ENCODE measurements at regions of chr3 and their contacts with region 1.

Region 1: GRCh38 chr3:197749601-197750395 is at the start of gene FYTTD1:
- DNase-seq: peak; percentile 79 to 93 (median 88)
- ATAC-seq: peak; percentile 89
- H3K4me3 ChIP-seq: peak within 1 kb of the TSS; percentile 85
- H3K4me3 Mint-ChIP-seq: peak within 1 kb of the TSS; percentile 95 to 100 (median 98)
- H3K27ac ChIP-seq: peak within 1 kb of the TSS; percentile 94
- H3K27ac Mint-ChIP-seq: peak within 1 kb of the TSS; percentile 95 to 100 (median 99)
- H3K4me1 ChIP-seq: peaks cover 11 to 32% of the 10 kb centered on the region in 2 donors
- H3K4me1 Mint-ChIP-seq: peaks cover 27 to 61% (median 52%) of the 10 kb centered on the region in 7 donors
- H3K27me3 ChIP-seq: no peaks in the 10 kb centered on the region
- H3K27me3 Mint-ChIP-seq: no peaks in the 10 kb centered on the region
- total RNA-seq, gene FYTTD1: 45.6 to 63.4 (median 58.0) TPM

Region 2: DNA sequence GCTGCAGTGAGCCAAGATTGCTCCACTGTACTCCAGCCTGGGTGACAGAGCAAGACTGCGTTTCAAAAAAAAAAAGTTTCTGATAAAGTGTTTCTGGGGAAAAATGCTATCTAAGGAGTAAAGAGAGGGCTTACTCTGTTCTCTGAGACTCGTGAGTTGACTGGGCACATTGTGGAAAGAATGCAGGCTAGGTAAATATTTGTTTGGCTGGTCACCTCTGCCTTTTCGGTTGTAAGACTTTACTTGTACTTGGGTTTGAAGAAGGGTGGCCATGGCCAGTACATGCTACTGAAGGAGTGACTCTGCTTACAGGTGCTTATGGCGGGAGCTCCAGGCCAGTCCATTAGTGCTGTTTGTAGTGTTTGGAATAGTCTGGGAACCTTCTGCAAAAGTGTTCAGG is 81.8 kb before region 1 on chr3:
- CTCF ChIA-PET with region 1: no interaction called
- POLR2A ChIA-PET with region 1: no interaction called
- intact Hi-C with region 1: no loop called
- DNase-seq: no peak
- ATAC-seq: no peak
- H3K4me3 ChIP-seq: no peak overlapping the region
- H3K4me3 Mint-ChIP-seq: no peak overlapping the region
- H3K27ac ChIP-seq: no peak overlapping the region
- H3K27ac Mint-ChIP-seq: peak overlapping the region in 1 of 9 donors; percentile 39
- H3K4me1 ChIP-seq: no peaks in the 10 kb centered on the region
- H3K4me1 Mint-ChIP-seq: no peaks in the 10 kb centered on the region
- H3K27me3 ChIP-seq: no peaks in the 10 kb centered on the region
- H3K27me3 Mint-ChIP-seq: no peaks in the 10 kb centered on the region

Region 3: DNA sequence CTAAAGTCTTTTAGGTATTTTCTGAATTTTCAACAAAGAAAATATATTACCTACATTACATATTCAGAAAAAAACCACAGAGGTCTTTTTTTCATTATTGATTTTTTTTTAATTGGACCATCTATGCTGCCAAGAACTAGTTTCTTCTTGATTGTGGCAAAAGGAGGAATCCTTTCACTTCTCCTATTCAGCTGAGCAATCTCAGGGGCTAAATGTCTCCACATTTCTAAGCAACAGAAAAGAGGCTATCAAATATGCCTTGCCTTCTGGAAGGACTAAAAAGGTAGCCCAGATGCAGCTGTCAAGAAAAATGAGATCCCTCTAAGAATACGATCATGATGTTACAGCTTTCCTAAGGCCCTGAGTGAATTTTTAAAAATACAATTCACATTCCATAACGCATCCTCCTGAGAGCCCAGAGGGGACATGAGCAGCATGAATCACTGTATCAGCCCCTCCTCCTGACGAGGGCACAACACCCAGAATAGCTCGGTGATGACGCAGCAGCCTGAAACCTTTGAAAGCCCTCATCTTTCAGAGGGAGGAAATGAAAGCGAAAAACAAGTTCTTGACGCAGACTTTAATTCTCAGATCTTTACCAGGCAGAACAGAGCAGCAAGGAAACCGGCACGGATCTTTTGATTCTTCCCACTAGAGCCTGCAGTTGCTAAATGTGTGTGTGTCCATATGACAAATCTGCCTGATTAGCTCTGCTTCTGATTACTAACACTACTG is 37.7 kb before region 1 on chr3:
- CTCF ChIA-PET with region 1: interaction called, 4 read pairs
- POLR2A ChIA-PET with region 1: interaction called, 22 read pairs
- intact Hi-C with region 1: loop called (anchors 1 kb)
- DNase-seq: peak; percentile 56 to 95 (median 91)
- ATAC-seq: peak; percentile 99
- H3K4me3 ChIP-seq: peak overlapping the region; percentile 58
- H3K4me3 Mint-ChIP-seq: peak overlapping the region; percentile 65 to 92 (median 80)
- H3K27ac ChIP-seq: peak overlapping the region; percentile 82
- H3K27ac Mint-ChIP-seq: peak overlapping the region; percentile 91 to 99 (median 97)
- H3K4me1 ChIP-seq: peaks cover 14 to 15% of the 10 kb centered on the region in 2 donors
- H3K4me1 Mint-ChIP-seq: peaks cover 7 to 37% (median 26%) of the 10 kb centered on the region in 7 donors
- H3K27me3 ChIP-seq: no peaks in the 10 kb centered on the region
- H3K27me3 Mint-ChIP-seq: no peaks in the 10 kb centered on the region

Region 4: GRCh38 chr3:197791113-197791891 is 41.5 kb after region 1 on chr3 and contains the start of gene LRCH3:
- CTCF ChIA-PET with region 1: interaction called, 3 read pairs
- POLR2A ChIA-PET with region 1: interaction called, 9 read pairs
- intact Hi-C with region 1: loop called (anchors 1 kb)
- DNase-seq: peak; percentile 71 to 92 (median 82)
- ATAC-seq: peak; percentile 81
- H3K4me3 ChIP-seq: peak within 1 kb of the TSS; percentile 69
- H3K4me3 Mint-ChIP-seq: peak within 1 kb of the TSS; percentile 91 to 99 (median 96)
- H3K27ac ChIP-seq: peak within 1 kb of the TSS; percentile 97
- H3K27ac Mint-ChIP-seq: peak within 1 kb of the TSS; percentile 95 to 100 (median 97)
- H3K4me1 ChIP-seq: peaks cover 6 to 17% of the 10 kb centered on the region in 2 donors
- H3K4me1 Mint-ChIP-seq: peaks cover 20 to 54% (median 45%) of the 10 kb centered on the region in 7 donors
- H3K27me3 ChIP-seq: no peaks in the 10 kb centered on the region
- H3K27me3 Mint-ChIP-seq: peaks cover 0 to 1% (median 0%) of the 10 kb centered on the region in 5 donors
- total RNA-seq, gene LRCH3: 43.5 to 75.5 (median 68.5) TPM

Region 5: DNA sequence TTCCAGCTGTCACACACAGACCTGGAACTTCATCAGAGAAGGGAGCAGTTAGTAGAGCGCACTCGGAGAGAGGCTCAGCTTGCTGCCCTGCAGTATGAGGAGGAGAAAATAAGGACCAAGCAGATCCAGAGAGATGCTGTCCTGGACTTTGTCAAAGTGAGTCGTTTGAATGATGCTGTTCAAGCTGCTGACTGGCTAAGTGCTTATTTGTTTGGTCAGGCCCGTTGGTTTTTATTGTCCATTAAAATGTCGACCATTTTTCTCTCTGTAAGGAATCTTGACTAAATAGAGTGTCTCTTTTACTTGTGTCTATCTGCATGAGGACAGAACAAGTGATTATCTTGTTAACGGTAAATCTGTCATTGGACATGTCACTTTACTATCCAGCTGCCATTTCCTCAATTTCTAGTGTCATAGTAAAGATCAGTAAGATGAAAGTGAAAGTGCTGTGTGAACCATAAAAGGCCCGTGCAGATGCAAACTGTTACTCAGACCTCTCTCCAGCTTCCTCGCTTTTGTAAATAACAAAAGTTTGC is 98.1 kb after region 1 on chr3:
- CTCF ChIA-PET with region 1: no interaction called
- POLR2A ChIA-PET with region 1: no interaction called
- intact Hi-C with region 1: loop called in 1 of 2 experiments (anchors 2 kb)
- DNase-seq: peak in 7 of 9 donors; percentile 33 to 65 (median 53)
- ATAC-seq: peak; percentile 92
- H3K4me3 ChIP-seq: peak overlapping the region; percentile 49
- H3K4me3 Mint-ChIP-seq: peak overlapping the region; percentile 58 to 93 (median 86)
- H3K27ac ChIP-seq: peak overlapping the region; percentile 67
- H3K27ac Mint-ChIP-seq: peak overlapping the region; percentile 88 to 98 (median 93)
- H3K4me1 ChIP-seq: peaks cover 3 to 8% of the 10 kb centered on the region in 2 donors
- H3K4me1 Mint-ChIP-seq: peaks cover 18 to 30% (median 26%) of the 10 kb centered on the region in 7 donors
- H3K27me3 ChIP-seq: no peaks in the 10 kb centered on the region
- H3K27me3 Mint-ChIP-seq: no peaks in the 10 kb centered on the region

Region 6: DNA sequence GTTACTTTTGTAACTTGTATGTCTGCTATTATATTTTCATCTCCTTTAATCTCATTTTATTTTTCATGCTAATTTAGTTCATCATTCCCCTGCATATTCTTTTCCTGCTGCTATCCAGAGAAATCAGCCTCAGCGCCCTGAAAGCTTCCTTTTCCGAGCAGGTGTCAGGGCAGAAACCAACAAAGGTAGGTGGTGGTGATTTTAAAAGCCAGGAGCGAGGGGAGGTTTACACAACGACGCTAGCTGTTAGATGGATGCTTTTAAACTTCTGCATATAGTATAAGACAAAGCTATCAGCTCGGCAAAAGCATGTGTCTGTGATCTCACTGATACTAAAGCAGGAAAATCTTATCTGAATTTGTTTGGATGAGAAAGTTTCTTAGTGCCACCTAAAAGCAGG is 116.2 kb after region 1 on chr3:
- CTCF ChIA-PET with region 1: no interaction called
- POLR2A ChIA-PET with region 1: no interaction called
- intact Hi-C with region 1: no loop called
- DNase-seq: no peak
- ATAC-seq: no peak
- H3K4me3 ChIP-seq: no peak overlapping the region
- H3K4me3 Mint-ChIP-seq: no peak overlapping the region
- H3K27ac ChIP-seq: no peak overlapping the region
- H3K27ac Mint-ChIP-seq: no peak overlapping the region
- H3K4me1 ChIP-seq: peaks cover 6 to 8% of the 10 kb centered on the region in 2 donors
- H3K4me1 Mint-ChIP-seq: peaks cover 4 to 14% (median 11%) of the 10 kb centered on the region in 7 donors
- H3K27me3 ChIP-seq: no peaks in the 10 kb centered on the region
- H3K27me3 Mint-ChIP-seq: no peaks in the 10 kb centered on the region

Region 7: DNA sequence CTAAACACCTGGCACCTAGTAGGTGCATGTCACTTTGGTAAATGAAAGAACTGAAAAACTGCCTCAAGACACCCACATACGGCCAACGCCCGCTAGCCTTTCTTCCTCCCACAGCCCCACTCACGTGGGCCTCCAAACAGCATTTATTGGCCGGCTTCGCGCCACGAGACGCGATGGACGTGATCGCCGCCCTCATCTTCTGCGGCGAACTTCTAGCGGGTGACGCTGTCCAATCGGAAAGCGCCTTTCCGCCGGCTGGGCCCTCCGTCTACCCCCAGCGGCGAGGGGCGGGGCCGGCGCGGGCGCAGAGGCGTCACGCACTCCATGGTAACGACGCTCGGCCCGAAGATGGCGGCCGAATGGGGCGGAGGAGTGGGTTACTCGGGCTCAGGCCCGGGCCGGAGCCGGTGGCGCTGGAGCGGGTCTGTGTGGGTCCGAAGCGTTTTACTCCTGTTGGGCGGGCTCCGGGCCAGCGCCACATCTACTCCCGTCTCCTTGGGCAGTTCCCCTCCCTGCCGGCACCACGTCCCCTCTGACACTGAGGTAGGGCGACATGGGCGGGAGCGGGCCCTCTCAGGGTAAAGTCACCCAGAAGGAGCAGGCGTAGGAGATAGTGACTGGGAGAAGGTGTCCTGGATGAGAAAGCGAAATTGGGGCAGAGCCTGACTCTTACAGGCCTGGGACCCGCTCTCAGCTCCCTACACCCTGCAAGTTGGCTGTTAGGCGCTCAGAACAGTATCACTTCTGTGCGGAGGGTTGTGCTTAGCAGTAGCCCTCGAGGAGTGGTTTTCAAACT is 210.3 kb after region 1 on chr3 and contains the start of gene LMLN:
- CTCF ChIA-PET with region 1: no interaction called
- POLR2A ChIA-PET with region 1: no interaction called
- intact Hi-C with region 1: loop called in 1 of 2 experiments (anchors 5 kb)
- DNase-seq: peak; percentile 93 to 96 (median 95)
- ATAC-seq: peak; percentile 98
- H3K4me3 ChIP-seq: peak within 1 kb of the TSS; percentile 91
- H3K4me3 Mint-ChIP-seq: peak within 1 kb of the TSS; percentile 86 to 98 (median 92)
- H3K27ac ChIP-seq: peak within 1 kb of the TSS; percentile 86
- H3K27ac Mint-ChIP-seq: peak within 1 kb of the TSS; percentile 92 to 97 (median 96)
- H3K4me1 ChIP-seq: peaks cover 26 to 27% of the 10 kb centered on the region in 2 donors
- H3K4me1 Mint-ChIP-seq: peaks cover 33 to 74% (median 48%) of the 10 kb centered on the region in 7 donors
- H3K27me3 ChIP-seq: no peaks in the 10 kb centered on the region
- H3K27me3 Mint-ChIP-seq: peaks cover 0 to 2% (median 0%) of the 10 kb centered on the region in 5 donors
- total RNA-seq, gene LMLN: 4.2 to 10.9 (median 6.8) TPM

Region 8: DNA sequence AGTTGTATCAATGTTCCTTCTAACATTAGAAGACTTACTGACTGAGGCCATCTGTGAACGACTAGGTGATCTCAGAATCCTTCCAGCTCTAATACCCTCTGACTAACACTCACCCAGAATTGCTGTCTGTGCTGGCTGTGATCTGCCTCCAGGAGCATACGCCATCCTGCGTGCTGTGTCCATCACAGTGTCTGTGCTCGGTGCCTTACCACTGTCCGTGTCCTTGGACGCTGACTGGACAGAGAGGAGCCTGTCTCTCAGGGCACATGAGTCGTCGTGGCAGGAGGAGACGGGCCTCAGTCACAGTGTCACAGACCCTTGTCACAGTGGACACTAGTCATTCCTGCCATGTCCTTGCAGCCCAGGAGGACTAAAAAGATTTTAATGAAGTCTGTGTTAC is 293.3 kb after region 1 on chr3:
- CTCF ChIA-PET with region 1: no interaction called
- POLR2A ChIA-PET with region 1: no interaction called
- intact Hi-C with region 1: no loop called
- DNase-seq: no peak
- ATAC-seq: no peak
- H3K4me3 ChIP-seq: no peak overlapping the region
- H3K4me3 Mint-ChIP-seq: no peak overlapping the region
- H3K27ac ChIP-seq: no peak overlapping the region
- H3K27ac Mint-ChIP-seq: no peak overlapping the region
- H3K4me1 ChIP-seq: no peaks in the 10 kb centered on the region
- H3K4me1 Mint-ChIP-seq: peaks cover 0 to 5% (median 0%) of the 10 kb centered on the region in 7 donors
- H3K27me3 ChIP-seq: no peaks in the 10 kb centered on the region
- H3K27me3 Mint-ChIP-seq: no peaks in the 10 kb centered on the region

Measured in naive thymus-derived CD4-positive, alpha-beta T cell (primary cell).